ENCODE measurements at regions of chr9 and their contacts with region 1.

Region 1: GRCh38 chr9:95510709-95511615 is 5.8 kb downstream of the PTCH1 start:
- DNase-seq: peak; percentile 86
- ATAC-seq: peak; percentile 79
- H3K4me3 ChIP-seq: peak overlapping the region; percentile 76 to 90
- H3K27ac ChIP-seq: peak overlapping the region; percentile 74
- H3K4me1 ChIP-seq: peaks cover 13 to 28% of the 10 kb centered on the region in 2 experiments
- H3K27me3 ChIP-seq: no peaks in the 10 kb centered on the region
- CTCF ChIP-seq: no peak
- POLR2A ChIP-seq: no peak
- RAD21 ChIP-seq: no peak

Region 2: GRCh38 chr9:95317119-95317892 is 193.7 kb before region 1 on chr9 and contains the start of gene FANCC:
- CTCF ChIA-PET with region 1: no interaction called
- POLR2A ChIA-PET with region 1: no interaction called
- RAD21 ChIA-PET with region 1: no interaction called
- intact Hi-C with region 1: loop called (anchors 2 kb)
- DNase-seq: peak; percentile 66
- ATAC-seq: peak; percentile 83
- H3K4me3 ChIP-seq: peak within 1 kb of the TSS; percentile 66 to 72
- H3K27ac ChIP-seq: peak within 1 kb of the TSS; percentile 99
- H3K4me1 ChIP-seq: peaks cover 2 to 41% of the 10 kb centered on the region in 2 experiments; a peak in 3 of 4 replicates
- H3K27me3 ChIP-seq: no peaks in the 10 kb centered on the region
- CTCF ChIP-seq: no peak
- POLR2A ChIP-seq: peak; percentile 36
- RAD21 ChIP-seq: no peak
- total RNA-seq, gene FANCC: 19.4 TPM

Region 3: DNA sequence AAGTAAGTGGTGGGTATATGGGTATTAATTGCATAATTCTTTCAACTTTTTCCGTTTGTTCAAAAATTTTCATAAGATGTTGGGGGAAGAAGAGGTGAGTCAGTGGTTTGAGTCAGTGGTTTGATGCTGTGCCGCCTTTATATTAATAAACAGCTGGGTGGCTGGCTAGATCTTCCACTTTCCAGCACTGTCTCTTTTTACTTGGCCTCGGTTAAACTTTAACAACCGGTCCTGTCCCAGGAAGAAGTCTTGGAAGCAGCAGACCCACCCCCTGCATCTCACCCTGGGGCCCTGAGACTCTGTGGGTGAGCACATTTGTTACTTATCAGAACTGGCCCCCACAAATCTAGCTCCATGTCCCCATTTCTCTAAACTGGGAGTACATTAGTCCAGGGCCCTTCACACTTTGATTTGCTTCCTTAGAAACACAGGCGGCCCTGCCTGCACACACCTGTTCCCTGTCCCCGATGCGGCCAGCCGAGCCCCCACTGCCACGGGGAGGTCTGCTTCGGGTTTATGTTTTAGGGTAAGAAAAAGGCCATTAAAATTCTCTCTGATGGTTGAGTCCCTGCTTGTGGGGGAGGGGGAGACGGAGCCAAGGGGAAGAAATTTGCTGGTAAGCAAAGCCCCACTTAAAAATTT is 84.9 kb before region 1 on chr9:
- CTCF ChIA-PET with region 1: no interaction called
- POLR2A ChIA-PET with region 1: no interaction called
- RAD21 ChIA-PET with region 1: no interaction called
- intact Hi-C with region 1: loop called (anchors 1 kb)
- DNase-seq: no peak
- ATAC-seq: peak; percentile 23
- H3K4me3 ChIP-seq: peak overlapping the region; percentile 74
- H3K27ac ChIP-seq: peak overlapping the region; percentile 86
- H3K4me1 ChIP-seq: peaks cover 7 to 20% of the 10 kb centered on the region in 2 experiments; a peak in 3 of 4 replicates
- H3K27me3 ChIP-seq: no peaks in the 10 kb centered on the region
- CTCF ChIP-seq: no peak
- POLR2A ChIP-seq: no peak
- RAD21 ChIP-seq: 0 out of 2 replicates have a peak, but pooled peaks have one; percentile 8

Region 4: GRCh38 chr9:95808011-95808410 is 297.0 kb after region 1 on chr9:
- CTCF ChIA-PET with region 1: no interaction called
- POLR2A ChIA-PET with region 1: no interaction called
- RAD21 ChIA-PET with region 1: no interaction called
- intact Hi-C with region 1: no loop called
- DNase-seq: no peak
- ATAC-seq: no peak
- H3K4me3 ChIP-seq: no peak overlapping the region
- H3K27ac ChIP-seq: no peak overlapping the region
- H3K4me1 ChIP-seq: no peaks in the 10 kb centered on the region; a peak in 1 of 4 replicates
- H3K27me3 ChIP-seq: no peaks in the 10 kb centered on the region; the same call in 1 of the 2 replicates
- CTCF ChIP-seq: no peak
- POLR2A ChIP-seq: no peak
- RAD21 ChIP-seq: no peak

Region 5: DNA sequence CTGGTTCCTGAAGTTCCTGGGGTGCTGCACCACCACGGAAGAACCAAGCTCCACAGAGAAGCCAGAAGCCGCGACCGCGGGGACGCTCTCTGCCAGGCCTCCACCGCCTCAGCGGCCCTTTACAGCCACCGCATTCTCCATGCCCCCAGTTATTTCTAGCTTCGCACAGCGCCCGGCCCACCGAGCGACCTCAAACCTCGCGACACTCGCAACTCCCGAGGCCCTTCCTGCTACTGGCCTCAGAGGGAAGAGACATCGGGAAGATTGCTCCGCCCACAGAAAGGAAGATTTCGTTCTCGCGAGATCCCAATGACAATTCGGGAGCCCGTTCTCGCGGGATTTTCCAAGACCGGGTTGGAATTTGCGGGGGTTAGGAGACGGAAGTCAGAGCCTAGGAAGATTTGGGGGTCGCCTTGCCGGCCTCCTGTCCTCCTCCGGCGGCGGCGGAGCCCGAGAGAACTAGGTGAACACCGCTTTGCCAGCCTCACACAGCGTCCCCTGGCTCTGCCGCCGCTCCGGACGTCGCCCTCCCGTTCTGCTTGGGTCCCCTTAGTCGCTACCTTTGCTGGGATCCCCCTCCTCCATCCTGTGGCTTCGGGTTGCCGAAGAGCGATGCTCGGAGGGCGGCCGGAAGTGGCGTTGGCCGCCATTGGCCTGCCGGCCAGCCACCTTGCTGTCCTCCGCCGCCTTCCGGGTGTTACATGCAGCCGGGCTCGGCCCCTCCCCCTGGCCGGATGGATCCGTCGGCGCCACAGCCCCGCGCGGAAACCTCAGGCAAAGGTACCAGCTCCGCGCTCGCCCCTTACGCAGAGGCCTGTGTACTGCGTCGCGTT is 364.6 kb after region 1 on chr9 and contains the start of gene ERCC6L2:
- CTCF ChIA-PET with region 1: no interaction called
- POLR2A ChIA-PET with region 1: no interaction called
- RAD21 ChIA-PET with region 1: no interaction called
- intact Hi-C with region 1: loop called (anchors 5 kb)
- DNase-seq: peak; percentile 99
- ATAC-seq: peak; percentile 88
- H3K4me3 ChIP-seq: no peak within 1 kb of the TSS
- H3K27ac ChIP-seq: no peak within 1 kb of the TSS; the same call in 1 of the 2 replicates
- H3K4me1 ChIP-seq: peaks cover 4 to 7% of the 10 kb centered on the region in 2 experiments; a peak in 3 of 4 replicates
- H3K27me3 ChIP-seq: no peaks in the 10 kb centered on the region
- CTCF ChIP-seq: no peak
- POLR2A ChIP-seq: peak; percentile 77
- RAD21 ChIP-seq: peak; percentile 13; the same call in 1 of the 2 replicates
- total RNA-seq, gene ERCC6L2: 39.2 TPM

Region 6: GRCh38 chr9:96725576-96725975 is 1214.6 kb after region 1 on chr9:
- CTCF ChIA-PET with region 1: no interaction called
- POLR2A ChIA-PET with region 1: no interaction called
- RAD21 ChIA-PET with region 1: no interaction called
- intact Hi-C with region 1: no loop called
- DNase-seq: no peak
- ATAC-seq: no peak
- H3K4me3 ChIP-seq: no peak overlapping the region
- H3K27ac ChIP-seq: no peak overlapping the region
- H3K4me1 ChIP-seq: no peaks in the 10 kb centered on the region
- H3K27me3 ChIP-seq: no peaks in the 10 kb centered on the region
- CTCF ChIP-seq: no peak
- POLR2A ChIP-seq: no peak
- RAD21 ChIP-seq: no peak

Measured in HCT116 (cell line).